ENCODE measurements at regions of chr17 and their contacts with region 1.

Region 1: GRCh38 chr17:4366327-4367063 is at the start of gene UBE2G1:
- DNase-seq: peak; percentile 97 to 100 (median 99)
- ATAC-seq: peak; percentile 93
- H3K4me3 ChIP-seq: peak within 1 kb of the TSS; percentile 58
- H3K4me3 Mint-ChIP-seq: peak within 1 kb of the TSS; percentile 82 to 95 (median 89)
- H3K27ac ChIP-seq: peak within 1 kb of the TSS; percentile 94
- H3K27ac Mint-ChIP-seq: peak within 1 kb of the TSS; percentile 91 to 99 (median 96)
- H3K4me1 ChIP-seq: peaks cover 11% of the 10 kb centered on the region in 2 donors
- H3K4me1 Mint-ChIP-seq: peaks cover 15 to 37% (median 33%) of the 10 kb centered on the region in 7 donors
- H3K27me3 ChIP-seq: no peaks in the 10 kb centered on the region
- H3K27me3 Mint-ChIP-seq: no peaks in the 10 kb centered on the region
- total RNA-seq, gene UBE2G1: 50.1 to 63.7 (median 56.6) TPM

Region 2: DNA sequence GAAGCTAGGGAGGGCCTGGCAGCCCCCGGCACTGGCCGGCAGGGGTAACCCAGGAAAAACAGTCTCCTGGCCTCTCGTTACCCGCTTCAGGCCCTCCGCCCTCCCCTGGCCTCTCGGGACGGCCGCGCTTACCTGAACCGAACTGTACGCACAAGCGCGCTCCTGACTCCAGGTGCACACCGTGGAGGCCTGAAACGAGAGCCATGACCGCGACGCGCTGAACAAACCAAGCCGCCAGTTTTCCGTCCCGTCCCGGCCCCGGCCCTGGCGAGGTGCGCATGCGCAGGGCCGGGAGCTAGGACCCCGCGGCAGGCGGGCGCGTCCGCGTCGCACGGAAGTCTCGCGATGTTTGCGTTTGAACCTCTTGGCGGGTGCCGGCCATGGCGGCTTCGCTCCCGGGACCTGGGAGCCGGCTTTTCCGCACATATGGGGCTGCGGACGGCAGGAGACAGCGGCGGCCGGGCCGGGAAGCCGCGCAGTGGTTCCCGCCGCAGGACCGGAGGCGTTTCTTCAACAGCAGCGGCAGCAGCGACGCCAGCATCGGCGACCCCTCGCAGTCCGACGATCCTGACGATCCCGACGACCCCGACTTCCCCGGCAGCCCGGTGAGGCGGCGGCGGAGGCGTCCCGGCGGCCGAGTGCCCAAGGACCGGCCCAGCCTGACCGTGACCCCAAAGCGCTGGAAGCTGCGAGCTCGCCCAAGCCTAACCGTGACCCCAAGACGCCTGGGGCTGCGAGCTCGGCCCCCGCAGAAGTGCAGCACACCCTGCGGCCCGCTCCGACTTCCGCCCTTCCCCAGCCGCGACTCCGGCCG is 642.7 kb before region 1 on chr17 and contains the start of gene HASPIN:
- CTCF ChIA-PET with region 1: no interaction called
- POLR2A ChIA-PET with region 1: no interaction called
- intact Hi-C with region 1: loop called (anchors 2 to 10 kb)
- DNase-seq: peak; percentile 85 to 97 (median 92)
- ATAC-seq: peak; percentile 92
- H3K4me3 ChIP-seq: peak within 1 kb of the TSS; percentile 77
- H3K4me3 Mint-ChIP-seq: peak within 1 kb of the TSS; percentile 84 to 95 (median 92)
- H3K27ac ChIP-seq: peak within 1 kb of the TSS; percentile 83
- H3K27ac Mint-ChIP-seq: peak within 1 kb of the TSS; percentile 65 to 94 (median 86)
- H3K4me1 ChIP-seq: peaks cover 7 to 24% of the 10 kb centered on the region in 2 donors
- H3K4me1 Mint-ChIP-seq: peaks cover 21 to 55% (median 39%) of the 10 kb centered on the region in 7 donors
- H3K27me3 ChIP-seq: no peaks in the 10 kb centered on the region
- H3K27me3 Mint-ChIP-seq: no peaks in the 10 kb centered on the region
- total RNA-seq, gene HASPIN: 0.32 to 18.5 (median 0.35) TPM

Region 3: DNA sequence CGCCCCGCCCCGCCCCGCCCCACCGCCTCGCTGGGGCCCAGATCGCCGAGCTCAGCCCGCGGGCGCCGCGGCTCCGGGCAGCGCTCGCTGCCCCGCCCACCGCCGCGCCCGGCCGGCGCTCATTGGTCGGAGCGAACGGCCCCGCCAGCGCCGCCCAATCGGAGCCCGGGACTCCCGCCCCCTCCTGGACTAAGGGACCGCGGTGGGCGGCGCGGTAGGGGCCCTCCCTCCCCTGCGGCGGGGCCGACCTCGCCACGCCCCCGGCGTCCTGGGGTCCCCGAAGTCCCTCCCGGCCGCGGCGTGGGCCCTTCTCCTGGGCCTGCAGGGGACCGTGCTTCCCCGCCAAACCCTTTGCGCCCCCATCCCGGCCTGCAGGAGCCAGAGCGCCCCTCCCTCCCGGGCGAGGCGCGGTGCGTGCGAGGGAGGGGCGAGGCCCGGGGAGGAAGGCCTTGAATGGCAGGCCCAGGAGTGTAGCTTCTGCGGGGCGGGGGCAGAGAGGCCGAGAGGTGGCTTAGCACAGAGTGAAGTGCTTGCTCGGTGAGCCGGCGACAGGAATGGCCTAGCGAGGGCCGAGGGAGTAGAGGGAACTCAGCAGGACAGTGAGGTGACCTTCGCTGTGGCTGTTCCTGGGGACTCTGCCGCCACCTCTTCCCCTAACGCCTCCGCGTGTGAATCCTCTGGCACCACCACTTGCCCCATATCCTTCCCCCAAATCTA is 473.3 kb before region 1 on chr17 and contains the start of gene CAMKK1:
- CTCF ChIA-PET with region 1: no interaction called
- POLR2A ChIA-PET with region 1: no interaction called
- intact Hi-C with region 1: loop called (anchors 2 to 5 kb)
- DNase-seq: peak; percentile 71 to 96 (median 85)
- ATAC-seq: peak; percentile 87
- H3K4me3 ChIP-seq: peak within 1 kb of the TSS; percentile 70
- H3K4me3 Mint-ChIP-seq: peak within 1 kb of the TSS; percentile 81 to 90 (median 86)
- H3K27ac ChIP-seq: peak within 1 kb of the TSS; percentile 77
- H3K27ac Mint-ChIP-seq: peak within 1 kb of the TSS; percentile 73 to 93 (median 88)
- H3K4me1 ChIP-seq: peaks cover 11 to 23% of the 10 kb centered on the region in 2 donors
- H3K4me1 Mint-ChIP-seq: peaks cover 23 to 45% (median 35%) of the 10 kb centered on the region in 7 donors
- H3K27me3 ChIP-seq: no peaks in the 10 kb centered on the region
- H3K27me3 Mint-ChIP-seq: peaks cover 0 to 7% (median 0%) of the 10 kb centered on the region in 5 donors
- total RNA-seq, gene CAMKK1: 4.8 to 12.5 (median 6.3) TPM

Region 4: DNA sequence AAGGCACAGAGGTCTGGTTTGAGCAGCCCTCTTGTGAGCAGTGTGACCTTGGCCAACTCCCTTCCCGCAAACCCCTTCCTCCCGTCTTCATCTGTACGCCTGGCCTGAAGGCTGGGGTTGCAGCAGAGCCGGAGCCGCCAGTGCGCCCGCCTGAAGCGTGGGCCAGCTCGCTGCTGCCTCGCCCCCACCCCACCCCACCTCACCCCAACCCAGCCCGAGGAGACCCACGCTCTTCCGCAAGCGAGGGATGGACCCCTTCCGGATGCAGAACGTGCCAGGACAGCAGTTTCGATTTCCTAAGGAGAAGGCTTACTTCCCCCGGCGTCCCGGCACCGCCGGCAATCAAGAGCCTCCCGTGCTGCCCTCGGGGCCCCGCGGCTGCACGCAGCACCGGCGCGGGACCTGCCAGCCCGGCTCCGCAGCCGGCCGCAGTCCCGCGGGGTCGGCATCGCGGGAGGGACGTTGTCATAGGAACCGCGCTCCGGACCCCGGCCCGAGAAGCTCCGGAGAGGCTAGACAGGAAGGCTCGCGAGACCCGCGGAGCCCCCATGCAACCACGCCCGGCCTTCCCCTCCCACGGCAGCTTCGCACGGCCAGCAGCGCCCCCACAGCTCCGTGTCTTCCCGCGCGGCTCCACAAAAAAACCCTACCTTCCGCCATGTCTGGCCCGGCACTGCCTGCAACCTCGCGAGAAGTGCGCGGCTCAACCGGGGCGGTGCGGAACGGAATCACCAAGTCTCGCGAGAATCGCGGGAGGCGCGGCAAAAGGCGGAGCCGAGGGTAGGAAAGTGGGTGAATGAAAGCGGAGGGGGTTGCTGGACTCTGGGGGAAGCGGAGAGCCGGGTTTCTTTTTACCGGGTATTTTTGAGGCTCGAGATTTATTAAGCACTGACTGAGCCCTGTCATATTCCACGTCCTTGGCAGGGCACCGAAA is 102.9 kb before region 1 on chr17 and contains the start of gene ANKFY1:
- CTCF ChIA-PET with region 1: no interaction called
- POLR2A ChIA-PET with region 1: interaction called, 4 read pairs
- intact Hi-C with region 1: loop called (anchors 1 to 2 kb)
- DNase-seq: peak; percentile 95 to 99 (median 97)
- ATAC-seq: peak; percentile 98
- H3K4me3 ChIP-seq: peak within 1 kb of the TSS; percentile 73
- H3K4me3 Mint-ChIP-seq: peak within 1 kb of the TSS; percentile 89 to 99 (median 94)
- H3K27ac ChIP-seq: peak within 1 kb of the TSS; percentile 94
- H3K27ac Mint-ChIP-seq: peak within 1 kb of the TSS; percentile 82 to 98 (median 95)
- H3K4me1 ChIP-seq: peaks cover 16 to 17% of the 10 kb centered on the region in 2 donors
- H3K4me1 Mint-ChIP-seq: peaks cover 27 to 49% (median 41%) of the 10 kb centered on the region in 7 donors
- H3K27me3 ChIP-seq: no peaks in the 10 kb centered on the region
- H3K27me3 Mint-ChIP-seq: no peaks in the 10 kb centered on the region
- total RNA-seq, gene ANKFY1: 52.4 to 84.5 (median 69.7) TPM

Region 5: GRCh38 chr17:4412933-4413831 is 46.7 kb after region 1 on chr17:
- CTCF ChIA-PET with region 1: no interaction called
- POLR2A ChIA-PET with region 1: no interaction called
- intact Hi-C with region 1: loop called (anchors 1 kb)
- DNase-seq: peak; percentile 69 to 92 (median 83)
- ATAC-seq: peak; percentile 98
- H3K4me3 ChIP-seq: no peak overlapping the region
- H3K4me3 Mint-ChIP-seq: peak overlapping the region in 9 of 10 donors; percentile 39 to 73 (median 51)
- H3K27ac ChIP-seq: no peak overlapping the region
- H3K27ac Mint-ChIP-seq: peak overlapping the region in 3 of 9 donors; percentile 36 to 78 (median 49)
- H3K4me1 ChIP-seq: peaks cover 4 to 5% of the 10 kb centered on the region in 2 donors
- H3K4me1 Mint-ChIP-seq: peaks cover 0 to 9% (median 5%) of the 10 kb centered on the region in 7 donors
- H3K27me3 ChIP-seq: no peaks in the 10 kb centered on the region
- H3K27me3 Mint-ChIP-seq: peaks cover 0 to 1% (median 0%) of the 10 kb centered on the region in 5 donors

Region 6: DNA sequence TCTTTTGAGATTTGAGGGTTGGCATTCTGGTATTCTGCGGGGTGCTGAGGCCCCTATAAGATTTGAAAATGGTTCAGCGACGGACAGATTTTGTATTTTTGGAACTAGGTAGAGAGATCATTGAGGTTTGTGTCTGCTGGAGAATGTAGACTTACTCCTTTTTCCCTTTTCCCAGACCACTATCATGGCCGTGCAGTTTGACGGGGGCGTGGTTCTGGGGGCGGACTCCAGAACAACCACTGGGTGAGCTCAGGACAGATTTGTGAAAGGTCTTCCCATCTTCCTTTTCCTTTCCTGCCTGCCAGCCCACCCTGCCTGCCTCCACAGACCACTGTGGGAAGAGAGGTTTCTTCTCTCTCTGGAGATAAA is 430.0 kb after region 1 on chr17:
- CTCF ChIA-PET with region 1: no interaction called
- POLR2A ChIA-PET with region 1: no interaction called
- intact Hi-C with region 1: loop called in 1 of 2 experiments (anchors 2 kb)
- DNase-seq: peak in 1 of 9 donors; percentile 43
- ATAC-seq: no peak
- H3K4me3 ChIP-seq: peak overlapping the region; percentile 76
- H3K4me3 Mint-ChIP-seq: peak overlapping the region; percentile 96 to 100 (median 99)
- H3K27ac ChIP-seq: peak overlapping the region; percentile 84
- H3K27ac Mint-ChIP-seq: peak overlapping the region; percentile 90 to 99 (median 96)
- H3K4me1 ChIP-seq: peaks cover 7% of the 10 kb centered on the region in 2 donors
- H3K4me1 Mint-ChIP-seq: peaks cover 12 to 14% (median 13%) of the 10 kb centered on the region in 7 donors
- H3K27me3 ChIP-seq: no peaks in the 10 kb centered on the region
- H3K27me3 Mint-ChIP-seq: peaks cover 0 to 6% (median 0%) of the 10 kb centered on the region in 5 donors